ENCODE measurements at regions of chr1 and their contacts with region 1.

Region 1: DNA sequence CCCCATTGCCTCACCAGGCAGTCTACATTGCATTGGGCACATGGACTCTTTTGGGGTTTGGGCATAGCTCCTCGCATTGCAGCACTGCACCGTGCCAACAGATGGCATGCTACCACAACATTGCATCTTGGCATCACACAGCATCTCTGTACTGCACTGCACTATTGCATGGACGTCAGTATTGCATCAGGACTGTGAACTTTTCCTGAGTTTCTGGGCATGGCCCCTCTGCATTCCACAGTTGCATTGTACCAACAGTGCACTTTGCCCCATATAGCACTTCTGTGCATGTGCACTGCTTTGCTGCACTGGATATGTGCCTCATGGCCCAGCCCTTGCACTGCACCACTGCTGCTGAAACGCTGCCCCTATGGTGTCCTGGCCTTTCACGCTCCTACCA is 9.6 kb downstream of the PTPRU start:
- DNase-seq: no peak
- H3K4me3 ChIP-seq: no peak overlapping the region
- H3K27ac ChIP-seq: no peak overlapping the region
- H3K4me1 ChIP-seq: no peaks in the 10 kb centered on the region
- H3K27me3 ChIP-seq: no peaks in the 10 kb centered on the region
- CTCF ChIP-seq: no peak
- EP300 ChIP-seq: no peak
- POLR2A ChIP-seq: no peak

Region 2: GRCh38 chr1:29471443-29472313 is 225.8 kb after region 1 on chr1:
- intact Hi-C with region 1: loop called in 1 of 4 experiments (anchors 10 kb)
- DNase-seq: no peak
- H3K4me3 ChIP-seq: no peak overlapping the region
- H3K27ac ChIP-seq: no peak overlapping the region
- H3K4me1 ChIP-seq: no peaks in the 10 kb centered on the region
- H3K27me3 ChIP-seq: no peaks in the 10 kb centered on the region
- CTCF ChIP-seq: no peak
- EP300 ChIP-seq: no peak
- POLR2A ChIP-seq: no peak

Region 3: GRCh38 chr1:29824511-29825273 is 578.8 kb after region 1 on chr1:
- intact Hi-C with region 1: no loop called
- DNase-seq: no peak
- H3K4me3 ChIP-seq: no peak overlapping the region
- H3K27ac ChIP-seq: no peak overlapping the region
- H3K4me1 ChIP-seq: no peaks in the 10 kb centered on the region
- H3K27me3 ChIP-seq: no peaks in the 10 kb centered on the region
- CTCF ChIP-seq: no peak
- EP300 ChIP-seq: no peak
- POLR2A ChIP-seq: no peak

Region 4: DNA sequence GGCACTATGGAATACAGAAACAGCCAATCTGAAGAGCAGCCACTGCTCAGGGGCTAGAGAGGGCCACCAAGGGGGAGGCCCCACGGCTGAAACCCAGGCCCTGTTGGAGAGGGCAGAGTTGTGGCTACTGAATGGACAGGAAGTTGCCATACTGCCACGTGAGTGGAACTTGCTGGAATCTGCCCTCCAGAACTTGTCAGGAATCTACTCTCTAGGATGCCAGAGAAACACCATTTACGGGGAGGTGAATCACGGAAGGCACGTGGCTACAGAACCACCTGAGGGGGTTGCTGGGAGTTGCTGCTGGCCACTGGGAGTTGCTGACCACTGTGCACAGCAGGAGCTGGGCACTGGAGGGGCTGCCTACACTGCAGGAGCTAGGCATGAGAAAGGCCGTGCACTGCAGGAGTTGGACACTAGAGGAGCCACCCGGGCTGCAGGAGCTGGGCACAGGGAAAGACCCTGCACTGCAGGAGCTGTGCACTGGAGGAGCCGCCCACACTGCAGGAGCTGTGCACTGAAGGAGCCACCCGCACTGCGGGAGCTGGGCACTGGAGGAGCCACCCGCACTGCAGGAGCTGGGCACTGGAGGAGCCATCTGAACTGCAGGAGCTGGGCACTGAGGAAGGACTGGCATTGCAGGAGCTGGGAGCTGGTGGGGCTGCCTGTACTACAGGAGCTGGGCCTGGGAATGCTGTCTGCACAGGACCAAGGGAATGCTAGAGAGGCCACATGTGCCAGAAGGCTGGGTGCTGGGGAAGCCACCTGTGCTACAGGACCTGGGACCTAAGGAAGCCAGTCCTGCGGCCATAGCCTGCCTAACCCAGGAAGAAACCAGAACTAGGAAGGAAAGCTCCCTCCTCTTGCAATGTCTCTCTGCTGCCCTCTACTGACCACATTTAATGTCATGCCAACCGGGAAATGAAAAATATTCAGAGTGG is 1134.1 kb after region 1 on chr1:
- intact Hi-C with region 1: loop called in 1 of 4 experiments (anchors 10 kb)
- DNase-seq: peak; percentile 44 to 56 (median 55)
- H3K4me3 ChIP-seq: no peak overlapping the region
- H3K27ac ChIP-seq: peak overlapping the region in 1 of 2 donors; percentile 3
- H3K4me1 ChIP-seq: peaks cover 13% of the 10 kb centered on the region
- H3K27me3 ChIP-seq: no peaks in the 10 kb centered on the region
- CTCF ChIP-seq: peak; percentile 33 to 73 (median 71)
- EP300 ChIP-seq: no peak
- POLR2A ChIP-seq: no peak